ENCODE measurements at regions of chr2 and their contacts with region 1.

Region 1: DNA sequence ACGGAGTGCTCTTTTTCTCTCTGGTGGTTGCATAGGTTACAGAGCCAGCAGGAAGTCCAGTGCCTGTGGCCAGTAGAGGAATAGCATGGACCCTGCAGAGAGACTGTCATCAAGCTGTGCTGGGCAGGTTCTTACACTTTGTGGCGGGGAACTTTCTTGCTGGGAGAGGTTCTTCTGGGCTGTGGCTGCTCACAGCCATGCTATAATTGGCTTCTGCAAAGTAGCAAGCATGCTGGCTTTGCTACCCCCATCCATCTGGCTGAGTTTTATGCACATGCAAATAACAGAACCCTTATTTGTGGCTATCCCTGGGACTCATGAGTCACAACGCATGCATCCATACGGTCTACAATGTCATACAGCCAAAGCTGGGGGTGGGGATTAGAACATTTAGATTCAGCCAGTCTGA is 68.9 kb downstream of the PLCL1 start:
- DNase-seq: no peak
- ATAC-seq: no peak
- H3K4me3 ChIP-seq: no peak overlapping the region
- H3K4me3 Mint-ChIP-seq: no peak overlapping the region
- H3K27ac ChIP-seq: no peak overlapping the region
- H3K27ac Mint-ChIP-seq: no peak overlapping the region
- H3K4me1 ChIP-seq: peaks cover 33% of the 10 kb centered on the region
- H3K4me1 Mint-ChIP-seq: peaks cover 82% of the 10 kb centered on the region
- H3K27me3 ChIP-seq: no peaks in the 10 kb centered on the region
- H3K27me3 Mint-ChIP-seq: no peaks in the 10 kb centered on the region
- CTCF ChIP-seq: no peak

Region 2: DNA sequence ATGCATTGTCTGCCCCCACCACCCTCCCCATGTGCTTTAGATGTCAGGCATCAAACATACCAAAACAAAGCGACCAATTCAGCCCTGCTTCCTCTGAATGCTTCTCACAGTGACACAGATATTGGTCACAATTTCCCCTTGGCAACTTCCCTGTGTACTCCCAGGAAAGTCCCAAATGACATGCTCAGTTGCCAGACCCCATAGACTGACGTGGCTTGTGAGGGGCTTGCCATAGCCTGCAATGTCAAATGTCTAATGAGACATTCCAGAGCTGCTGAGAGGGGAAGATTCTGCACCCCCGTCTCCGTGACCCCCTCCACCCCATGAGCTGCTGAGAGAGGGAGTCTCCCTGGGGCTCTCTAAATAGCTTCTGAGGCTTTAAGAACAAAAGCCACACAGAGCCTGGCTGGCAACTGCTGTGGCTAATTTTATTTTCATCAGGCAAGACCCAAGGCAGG is 245.2 kb before region 1 on chr2:
- CTCF ChIA-PET with region 1: no interaction called
- POLR2A ChIA-PET with region 1: no interaction called
- intact Hi-C with region 1: no loop called
- DNase-seq: peak in 1 of 14 experiments; percentile 5
- ATAC-seq: no peak
- H3K4me3 ChIP-seq: no peak overlapping the region
- H3K4me3 Mint-ChIP-seq: no peak overlapping the region
- H3K27ac ChIP-seq: no peak overlapping the region
- H3K27ac Mint-ChIP-seq: no peak overlapping the region
- H3K4me1 ChIP-seq: no peaks in the 10 kb centered on the region
- H3K4me1 Mint-ChIP-seq: no peaks in the 10 kb centered on the region
- H3K27me3 ChIP-seq: no peaks in the 10 kb centered on the region
- H3K27me3 Mint-ChIP-seq: no peaks in the 10 kb centered on the region
- CTCF ChIP-seq: no peak

Region 3: DNA sequence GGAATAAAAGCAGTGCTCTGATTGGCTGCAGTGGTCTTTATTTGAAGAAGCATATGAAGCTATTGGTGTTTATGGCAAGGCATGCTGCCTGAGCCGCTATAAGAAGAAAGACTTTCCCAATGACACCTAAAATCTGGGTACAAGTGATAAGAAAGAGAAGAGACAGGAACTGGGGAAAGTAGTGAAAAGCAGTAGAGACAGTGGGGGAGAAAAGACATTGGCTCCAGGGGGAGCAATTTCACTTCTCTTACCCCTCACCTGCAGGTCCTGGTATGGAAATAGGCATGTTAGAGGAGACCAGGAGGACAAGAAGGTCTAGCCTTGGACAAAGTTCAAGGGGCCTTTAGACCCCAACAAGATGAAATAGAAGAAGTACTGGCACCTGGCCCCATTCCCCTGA is 21.8 kb before region 1 on chr2:
- CTCF ChIA-PET with region 1: no interaction called
- POLR2A ChIA-PET with region 1: interaction called, 35 read pairs
- intact Hi-C with region 1: loop called in 1 of 2 experiments (anchors 2 kb)
- DNase-seq: peak in 4 of 14 experiments; percentile 20 to 53 (median 38)
- ATAC-seq: no peak
- H3K4me3 ChIP-seq: no peak overlapping the region
- H3K4me3 Mint-ChIP-seq: peak overlapping the region; percentile 12
- H3K27ac ChIP-seq: no peak overlapping the region
- H3K27ac Mint-ChIP-seq: peak overlapping the region; percentile 94
- H3K4me1 ChIP-seq: peaks cover 24% of the 10 kb centered on the region
- H3K4me1 Mint-ChIP-seq: peaks cover 96% of the 10 kb centered on the region
- H3K27me3 ChIP-seq: no peaks in the 10 kb centered on the region
- H3K27me3 Mint-ChIP-seq: no peaks in the 10 kb centered on the region
- CTCF ChIP-seq: peak; percentile 29

Region 4: DNA sequence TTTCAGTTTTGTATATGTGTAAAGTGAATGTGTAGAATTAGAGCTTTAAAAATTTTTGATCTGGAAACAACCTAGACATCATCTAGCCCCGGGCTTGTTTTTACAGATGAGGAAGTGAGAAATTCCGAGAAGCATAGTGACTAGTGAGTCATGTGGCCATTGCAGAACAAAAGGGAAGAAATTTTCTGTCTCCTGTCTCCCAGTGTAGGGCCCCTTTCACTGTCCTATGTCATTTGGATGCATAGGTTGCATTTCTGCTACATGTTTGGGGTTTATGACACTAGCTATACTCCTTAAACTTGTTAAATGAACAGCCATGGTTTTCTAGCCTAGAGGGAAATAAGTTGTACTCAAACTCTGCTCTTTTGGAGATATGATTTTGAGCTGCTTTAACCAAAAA is 15.7 kb after region 1 on chr2:
- CTCF ChIA-PET with region 1: interaction called, 6 read pairs
- POLR2A ChIA-PET with region 1: interaction called, 21 read pairs
- intact Hi-C with region 1: loop called in 1 of 2 experiments (anchors 2 kb)
- DNase-seq: peak in 7 of 14 experiments; percentile 21 to 78 (median 44)
- ATAC-seq: peak; percentile 85
- H3K4me3 ChIP-seq: no peak overlapping the region
- H3K4me3 Mint-ChIP-seq: peak overlapping the region; percentile 64
- H3K27ac ChIP-seq: peak overlapping the region in 1 of 2 donors; percentile 6
- H3K27ac Mint-ChIP-seq: peak overlapping the region; percentile 90
- H3K4me1 ChIP-seq: peaks cover 28% of the 10 kb centered on the region
- H3K4me1 Mint-ChIP-seq: peaks cover 79% of the 10 kb centered on the region
- H3K27me3 ChIP-seq: no peaks in the 10 kb centered on the region
- H3K27me3 Mint-ChIP-seq: no peaks in the 10 kb centered on the region
- CTCF ChIP-seq: no peak

Region 5: GRCh38 chr2:197904446-197904845 is 31.1 kb after region 1 on chr2:
- CTCF ChIA-PET with region 1: no interaction called
- POLR2A ChIA-PET with region 1: interaction called, 3 read pairs
- intact Hi-C with region 1: loop called (anchors 5 kb)
- DNase-seq: peak in 6 of 14 experiments; percentile 5 to 68 (median 38)
- ATAC-seq: peak; percentile 92
- H3K4me3 ChIP-seq: no peak overlapping the region
- H3K4me3 Mint-ChIP-seq: peak overlapping the region; percentile 2
- H3K27ac ChIP-seq: no peak overlapping the region
- H3K27ac Mint-ChIP-seq: peak overlapping the region; percentile 66
- H3K4me1 ChIP-seq: peaks cover 8% of the 10 kb centered on the region
- H3K4me1 Mint-ChIP-seq: peaks cover 78% of the 10 kb centered on the region
- H3K27me3 ChIP-seq: no peaks in the 10 kb centered on the region
- H3K27me3 Mint-ChIP-seq: no peaks in the 10 kb centered on the region
- CTCF ChIP-seq: no peak

Region 6: DNA sequence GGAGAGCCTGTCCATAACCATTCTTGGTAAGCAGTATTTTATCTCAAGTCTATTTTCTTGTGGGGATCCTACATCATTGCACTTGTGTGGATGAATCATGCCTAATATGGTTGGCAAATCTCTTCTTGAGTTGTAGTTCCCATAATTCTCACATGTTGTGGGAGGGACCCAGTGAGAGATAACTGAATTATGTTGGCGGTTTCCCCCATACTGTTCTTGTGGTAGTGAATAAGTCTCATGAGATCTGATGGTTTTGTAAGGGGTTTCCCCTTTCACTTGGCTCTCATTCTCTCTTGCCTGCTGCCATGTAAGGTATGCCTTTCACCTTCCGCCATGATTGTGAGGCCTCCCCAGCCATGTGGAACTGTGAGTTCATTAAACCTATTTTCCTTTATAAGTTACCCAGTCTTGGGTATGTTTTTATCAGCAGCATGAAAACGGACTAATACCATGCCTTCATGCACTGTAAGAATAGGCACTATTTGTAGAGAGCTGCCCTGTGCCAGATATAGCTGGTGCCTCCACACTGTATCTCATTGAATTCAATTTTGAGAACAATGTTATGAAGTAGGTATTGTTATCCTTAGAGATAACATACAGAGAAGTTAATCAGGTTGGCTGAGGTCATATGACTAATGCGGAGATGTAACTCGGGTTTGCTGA is 79.4 kb after region 1 on chr2:
- CTCF ChIA-PET with region 1: no interaction called
- POLR2A ChIA-PET with region 1: no interaction called
- intact Hi-C with region 1: loop called in 1 of 2 experiments (anchors 1 kb)
- DNase-seq: peak in 1 of 14 experiments; percentile 16
- ATAC-seq: no peak
- H3K4me3 ChIP-seq: no peak overlapping the region
- H3K4me3 Mint-ChIP-seq: peak overlapping the region; percentile 7
- H3K27ac ChIP-seq: no peak overlapping the region
- H3K27ac Mint-ChIP-seq: peak overlapping the region; percentile 80
- H3K4me1 ChIP-seq: no peaks in the 10 kb centered on the region
- H3K4me1 Mint-ChIP-seq: peaks cover 94% of the 10 kb centered on the region
- H3K27me3 ChIP-seq: no peaks in the 10 kb centered on the region
- H3K27me3 Mint-ChIP-seq: no peaks in the 10 kb centered on the region
- CTCF ChIP-seq: no peak

Measured in CD4-positive, alpha-beta T cell (primary cell).